Endothelial cell of umbilical vein (primary cell): ENCODE measurements at regions of chr5 and their contacts with region 1.

Region 1: DNA sequence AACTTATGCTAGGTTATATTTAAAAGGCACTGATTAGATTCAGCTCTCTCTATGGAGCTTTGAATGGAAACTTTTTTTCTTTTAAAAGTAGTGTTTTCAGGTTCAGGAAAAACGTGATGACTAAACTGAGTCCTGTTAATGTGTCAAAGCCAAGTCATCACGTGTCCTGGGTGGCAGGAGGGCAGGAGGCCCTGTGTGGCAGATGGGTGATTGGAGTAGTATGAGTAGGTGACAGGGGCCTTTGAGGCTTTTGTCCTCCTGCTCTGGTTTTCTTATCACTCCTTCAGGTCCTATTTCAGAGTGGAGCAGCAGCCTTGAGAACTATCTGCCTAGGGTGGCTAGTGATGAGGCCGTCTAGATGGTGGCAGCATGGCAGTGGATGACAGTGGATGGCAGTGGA is 17.7 kb upstream of the CARTPT start:
- DNase-seq: no peak
- H3K4me3 ChIP-seq: no peak overlapping the region
- H3K27ac ChIP-seq: no peak overlapping the region
- H3K4me1 ChIP-seq: peaks cover 29% of the 10 kb centered on the region
- H3K27me3 ChIP-seq: peaks cover 26 to 27% of the 10 kb centered on the region in 2 experiments
- CTCF ChIP-seq: no peak
- POLR2A ChIP-seq: no peak

Region 2: DNA sequence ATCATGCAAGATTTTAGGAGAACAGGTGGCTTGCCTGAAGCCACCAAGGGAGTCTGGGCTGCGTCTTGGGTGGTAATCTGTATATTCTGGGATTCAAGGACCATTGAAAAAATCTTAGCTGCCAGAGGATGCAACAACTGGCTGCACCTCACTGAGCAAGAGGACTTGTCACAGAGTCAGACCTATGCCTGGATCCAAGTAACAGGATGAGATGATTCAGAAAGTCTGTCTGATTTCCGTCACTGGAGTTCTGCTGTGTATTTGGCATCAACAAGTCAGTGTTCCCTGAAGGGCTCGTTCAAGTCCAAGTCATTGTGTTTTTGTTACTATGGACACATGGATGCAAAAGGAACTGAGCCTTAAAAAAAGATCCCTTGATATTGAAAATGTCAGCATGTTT is 20.1 kb before region 1 on chr5:
- CTCF ChIA-PET with region 1: interaction called, 6 read pairs
- POLR2A ChIA-PET with region 1: interaction called, 4 read pairs
- dilution Hi-C with region 1: no loop called
- intact Hi-C with region 1: loop called (anchors 2 kb)
- DNase-seq: peak; percentile 76
- H3K4me3 ChIP-seq: no peak overlapping the region
- H3K27ac ChIP-seq: no peak overlapping the region
- H3K4me1 ChIP-seq: peaks cover 4% of the 10 kb centered on the region
- H3K27me3 ChIP-seq: peaks cover 30 to 33% of the 10 kb centered on the region in 2 experiments
- CTCF ChIP-seq: no peak
- POLR2A ChIP-seq: no peak